Motor neuron (in vitro differentiated cells): ENCODE measurements at regions of chr20 and their contacts with region 1.

Region 1: GRCh38 chr20:1437235-1437904 is 29.3 kb downstream of the NSFL1C start:
- ATAC-seq: peak in 5 of 8 experiments; percentile 7 to 55 (median 27)
- H3K4me3 ChIP-seq: no peak overlapping the region
- H3K27ac ChIP-seq: no peak overlapping the region
- H3K4me1 ChIP-seq: no peaks in the 10 kb centered on the region

Region 2: DNA sequence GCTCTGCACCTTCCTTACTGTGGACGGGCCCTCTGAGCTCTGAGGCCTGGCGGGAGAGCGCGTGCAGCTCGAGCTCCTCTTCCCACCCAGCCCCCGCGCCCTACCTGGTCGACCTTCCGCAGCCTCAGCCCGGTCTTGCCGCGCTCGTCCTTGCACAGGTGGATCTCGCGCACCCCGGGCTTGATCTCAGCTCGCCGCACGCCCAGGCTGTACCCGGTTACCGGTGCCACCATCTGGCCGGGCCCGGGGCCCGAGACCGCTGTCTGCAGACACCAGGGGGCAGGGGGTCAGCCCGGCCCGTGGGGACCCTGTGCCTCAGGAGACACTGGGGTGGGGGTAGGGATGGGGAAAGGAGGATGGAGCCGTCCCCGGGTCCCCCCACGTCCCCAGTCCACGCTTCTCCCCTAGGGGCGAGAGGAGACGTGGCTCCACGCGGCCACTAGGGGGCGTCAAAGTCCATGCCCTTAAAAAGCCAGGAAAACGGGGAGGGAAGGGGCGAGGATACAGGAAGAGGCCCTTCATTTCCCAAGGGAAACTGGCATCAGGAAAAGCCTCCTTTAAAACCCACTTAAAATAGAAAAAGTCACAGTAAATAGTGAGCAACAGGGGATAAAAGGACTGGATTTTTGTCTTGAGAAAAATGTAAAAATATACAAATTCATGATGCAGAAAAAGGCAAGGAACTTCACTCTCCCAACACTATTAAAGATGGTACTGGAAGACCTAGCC is 124.0 kb before region 1 on chr20:
- in situ Hi-C with region 1: loop called in 1 of 9 experiments (anchors 10 kb)
- ATAC-seq: peak; percentile 76 to 96 (median 88)
- H3K4me3 ChIP-seq: peak overlapping the region in 2 of 5 donors; percentile 14 to 23
- H3K27ac ChIP-seq: no peak overlapping the region
- H3K4me1 ChIP-seq: peaks cover 0 to 5% of the 10 kb centered on the region in 2 donors

Region 3: GRCh38 chr20:1325173-1326030 is 112.0 kb before region 1 on chr20:
- in situ Hi-C with region 1: loop called in 1 of 9 experiments (anchors 25 kb)
- ATAC-seq: peak; percentile 65 to 94 (median 90)
- H3K4me3 ChIP-seq: peak overlapping the region; percentile 66 to 98 (median 89)
- H3K27ac ChIP-seq: peak overlapping the region; percentile 98 to 99
- H3K4me1 ChIP-seq: peaks cover 22 to 24% of the 10 kb centered on the region in 2 donors